CD8-positive, alpha-beta T cell (primary cell): ENCODE measurements at regions of chr1 and their contacts with region 1.

Region 1: DNA sequence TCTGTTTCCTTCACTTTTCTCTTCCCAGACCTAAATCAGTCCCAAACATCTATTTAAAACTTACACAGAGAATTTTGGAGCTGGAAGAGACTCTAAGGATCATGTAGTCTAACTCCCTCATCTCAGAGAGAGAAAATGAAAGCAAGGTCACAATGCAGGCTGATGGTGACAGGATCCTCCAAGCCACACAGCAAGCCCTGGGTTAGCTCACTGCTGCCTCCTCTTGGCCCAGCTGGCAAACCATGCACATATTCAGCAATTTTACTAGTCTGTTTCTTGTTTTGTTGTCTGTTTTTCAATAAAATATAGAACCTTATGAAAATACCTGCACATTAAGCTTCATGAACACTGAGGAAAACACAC is 27.7 kb upstream of the LY9 start:
- DNase-seq: peak; percentile 72 to 94 (median 85)
- ATAC-seq: peak; percentile 92
- H3K4me3 ChIP-seq: peak overlapping the region; percentile 31 to 41
- H3K4me3 Mint-ChIP-seq: peak overlapping the region; percentile 82
- H3K27ac ChIP-seq: peak overlapping the region; percentile 33 to 85
- H3K27ac Mint-ChIP-seq: peak overlapping the region; percentile 96
- H3K4me1 ChIP-seq: peaks cover 18% of the 10 kb centered on the region
- H3K4me1 Mint-ChIP-seq: peaks cover 20% of the 10 kb centered on the region
- H3K27me3 ChIP-seq: no peaks in the 10 kb centered on the region
- H3K27me3 Mint-ChIP-seq: no peaks in the 10 kb centered on the region
- CTCF ChIP-seq: peak; percentile 92

Region 2: GRCh38 chr1:160681067-160681890 is 87.0 kb before region 1 on chr1:
- CTCF ChIA-PET with region 1: interaction called, 147 read pairs
- POLR2A ChIA-PET with region 1: interaction called, 9 read pairs
- intact Hi-C with region 1: loop called (anchors 1 kb)
- DNase-seq: peak; percentile 75 to 93 (median 91)
- ATAC-seq: peak; percentile 91
- H3K4me3 ChIP-seq: no peak overlapping the region
- H3K4me3 Mint-ChIP-seq: no peak overlapping the region
- H3K27ac ChIP-seq: peak overlapping the region; percentile 1 to 71
- H3K27ac Mint-ChIP-seq: peak overlapping the region; percentile 85
- H3K4me1 ChIP-seq: peaks cover 52% of the 10 kb centered on the region
- H3K4me1 Mint-ChIP-seq: peaks cover 54% of the 10 kb centered on the region
- H3K27me3 ChIP-seq: no peaks in the 10 kb centered on the region
- H3K27me3 Mint-ChIP-seq: no peaks in the 10 kb centered on the region
- CTCF ChIP-seq: peak; percentile 82

Region 3: DNA sequence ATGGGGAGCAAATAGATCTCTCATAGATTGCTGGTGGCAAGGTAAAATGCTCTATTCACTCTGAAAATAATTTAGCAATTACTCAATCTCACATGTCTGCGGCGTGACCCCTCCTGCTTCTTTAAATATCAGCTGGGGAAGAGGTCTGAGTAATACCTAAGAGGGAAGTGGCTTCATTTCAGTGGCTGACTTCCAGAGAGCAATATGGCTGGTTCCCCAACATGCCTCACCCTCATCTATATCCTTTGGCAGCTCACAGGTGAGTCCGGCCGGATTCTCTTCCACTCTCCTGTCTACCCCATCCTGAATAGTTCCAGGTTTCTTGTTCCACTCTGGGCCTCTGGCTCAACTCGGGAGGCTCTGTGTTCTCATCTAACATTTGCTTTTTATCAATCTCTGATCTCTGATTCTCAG is 29.2 kb before region 1 on chr1 and contains the start of gene SLAMF7:
- CTCF ChIA-PET with region 1: interaction called, 279 read pairs
- POLR2A ChIA-PET with region 1: interaction called, 16 read pairs
- intact Hi-C with region 1: no loop called
- DNase-seq: peak in 7 of 9 experiments; percentile 24 to 85 (median 57)
- ATAC-seq: peak; percentile 76
- H3K4me3 ChIP-seq: peak within 1 kb of the TSS; percentile 22 to 52
- H3K4me3 Mint-ChIP-seq: peak within 1 kb of the TSS; percentile 84
- H3K27ac ChIP-seq: peak within 1 kb of the TSS in 1 of 2 experiments; percentile 79
- H3K27ac Mint-ChIP-seq: peak within 1 kb of the TSS; percentile 86
- H3K4me1 ChIP-seq: peaks cover 29% of the 10 kb centered on the region
- H3K4me1 Mint-ChIP-seq: peaks cover 58% of the 10 kb centered on the region
- H3K27me3 ChIP-seq: no peaks in the 10 kb centered on the region
- H3K27me3 Mint-ChIP-seq: no peaks in the 10 kb centered on the region
- CTCF ChIP-seq: no peak
- total RNA-seq, gene SLAMF7: 13.3 to 14.8 TPM

Region 4: GRCh38 chr1:160755911-160756848 is 12.1 kb before region 1 on chr1:
- CTCF ChIA-PET with region 1: interaction called, 51 read pairs
- POLR2A ChIA-PET with region 1: interaction called, 3 read pairs
- intact Hi-C with region 1: loop called in 1 of 2 experiments (anchors 2 kb)
- DNase-seq: peak in 4 of 9 experiments; percentile 26 to 91 (median 70)
- ATAC-seq: peak; percentile 63
- H3K4me3 ChIP-seq: peak overlapping the region in 1 of 2 experiments; percentile 3
- H3K4me3 Mint-ChIP-seq: peak overlapping the region; percentile 37
- H3K27ac ChIP-seq: peak overlapping the region; percentile 34 to 71
- H3K27ac Mint-ChIP-seq: peak overlapping the region; percentile 94
- H3K4me1 ChIP-seq: peaks cover 31% of the 10 kb centered on the region
- H3K4me1 Mint-ChIP-seq: peaks cover 49% of the 10 kb centered on the region
- H3K27me3 ChIP-seq: no peaks in the 10 kb centered on the region
- H3K27me3 Mint-ChIP-seq: no peaks in the 10 kb centered on the region
- CTCF ChIP-seq: no peak

Region 5: DNA sequence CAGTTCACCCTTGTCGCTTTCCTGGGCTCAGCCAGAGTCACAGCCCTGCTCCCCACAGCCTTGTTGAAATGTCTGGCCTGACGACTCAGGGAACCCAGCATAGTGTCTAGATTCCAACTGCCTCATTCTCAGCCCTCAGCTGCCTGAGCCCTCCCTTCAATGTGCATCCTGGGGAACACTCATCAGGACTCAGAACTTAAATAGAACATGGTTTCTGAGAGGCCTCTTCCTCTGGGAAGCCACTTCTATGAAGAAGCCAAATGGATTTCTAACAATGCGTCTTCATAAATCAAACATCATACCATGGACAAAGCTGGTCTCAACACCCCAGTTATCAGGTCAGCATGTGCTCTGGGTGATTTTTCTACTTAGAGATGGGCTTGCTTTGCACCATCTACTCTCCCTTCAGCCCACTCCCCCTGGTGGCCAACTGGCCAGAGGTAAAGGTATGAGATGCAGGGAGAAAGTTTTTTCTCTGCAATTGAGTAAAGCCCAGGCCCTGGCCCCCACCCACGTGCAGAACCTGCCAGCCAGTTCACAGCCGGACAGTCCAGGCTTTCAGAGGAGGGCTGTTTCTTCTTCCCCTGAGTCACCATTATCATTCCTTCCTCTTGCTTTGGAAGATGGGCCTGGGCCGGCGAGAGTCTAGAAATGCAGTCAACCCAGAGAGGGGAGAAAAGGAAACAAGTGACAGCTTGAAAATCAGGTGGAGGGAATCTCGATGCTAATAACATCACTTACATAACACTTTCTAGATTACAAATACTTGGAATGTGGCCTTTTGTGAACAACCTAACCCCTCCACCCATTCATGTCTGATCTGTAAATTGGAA is 62.3 kb after region 1 on chr1:
- CTCF ChIA-PET with region 1: interaction called, 49 read pairs
- POLR2A ChIA-PET with region 1: no interaction called
- intact Hi-C with region 1: no loop called
- DNase-seq: peak; percentile 52 to 87 (median 80)
- ATAC-seq: peak; percentile 70
- H3K4me3 ChIP-seq: no peak overlapping the region
- H3K4me3 Mint-ChIP-seq: no peak overlapping the region
- H3K27ac ChIP-seq: peak overlapping the region in 1 of 2 experiments; percentile 15
- H3K27ac Mint-ChIP-seq: peak overlapping the region; percentile 86
- H3K4me1 ChIP-seq: peaks cover 25% of the 10 kb centered on the region
- H3K4me1 Mint-ChIP-seq: peaks cover 58% of the 10 kb centered on the region
- H3K27me3 ChIP-seq: no peaks in the 10 kb centered on the region
- H3K27me3 Mint-ChIP-seq: no peaks in the 10 kb centered on the region
- CTCF ChIP-seq: peak; percentile 73